Aorta (tissue), 5 donors: ENCODE measurements at regions of chr2 and their contacts with region 1.

Region 1: DNA sequence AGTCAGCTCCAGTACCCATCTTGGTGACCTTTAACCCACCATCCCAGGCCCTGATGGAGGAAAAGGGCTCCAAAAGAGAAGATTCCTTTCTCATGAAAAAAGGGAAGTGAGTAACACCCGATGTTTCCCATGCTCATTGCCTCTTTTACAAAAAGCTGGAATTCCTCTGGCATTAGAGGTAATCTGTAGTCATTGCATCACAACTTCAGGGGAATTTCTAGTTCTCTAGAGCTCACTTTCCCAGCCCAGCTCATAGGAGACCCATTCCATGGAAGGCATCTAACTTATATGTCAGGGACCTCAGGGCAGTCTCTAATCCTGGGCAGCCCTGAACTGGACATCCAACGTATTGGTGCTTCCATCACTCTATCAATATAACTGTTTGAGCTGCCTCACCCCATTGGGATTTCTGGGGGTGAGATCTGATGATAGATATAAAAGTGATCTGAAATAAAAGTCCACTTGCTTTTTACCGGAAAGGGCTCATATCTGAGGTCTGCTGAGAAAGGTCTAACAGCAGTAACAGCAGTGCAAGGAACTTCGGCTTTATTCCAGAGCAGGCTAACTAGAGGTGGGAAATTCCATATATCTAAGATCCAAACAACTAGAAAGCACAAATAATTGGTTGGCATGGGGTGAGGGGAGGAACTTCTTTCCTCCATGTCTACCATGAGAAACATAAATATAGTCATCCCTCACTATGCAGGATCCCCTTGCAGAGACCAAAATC is 106.1 kb downstream of the ETAA1 start:
- DNase-seq: no peak
- ATAC-seq: peak; percentile 52
- H3K4me3 ChIP-seq: no peak overlapping the region
- H3K27ac ChIP-seq: no peak overlapping the region
- H3K4me1 ChIP-seq: no peaks in the 10 kb centered on the region
- H3K27me3 ChIP-seq: no peaks in the 10 kb centered on the region

Region 2: GRCh38 chr2:67346718-67347407 is 156.4 kb before region 1 on chr2:
- intact Hi-C with region 1: no loop called
- DNase-seq: no peak
- ATAC-seq: no peak
- H3K4me3 ChIP-seq: no peak overlapping the region
- H3K27ac ChIP-seq: no peak overlapping the region
- H3K4me1 ChIP-seq: no peaks in the 10 kb centered on the region
- H3K27me3 ChIP-seq: no peaks in the 10 kb centered on the region

Region 3: GRCh38 chr2:67516899-67517530 is 13.8 kb after region 1 on chr2:
- intact Hi-C with region 1: loop called in 1 of 2 experiments (anchors 1 kb)
- DNase-seq: no peak
- ATAC-seq: no peak
- H3K4me3 ChIP-seq: no peak overlapping the region
- H3K27ac ChIP-seq: no peak overlapping the region
- H3K4me1 ChIP-seq: no peaks in the 10 kb centered on the region
- H3K27me3 ChIP-seq: no peaks in the 10 kb centered on the region